Transverse colon (tissue), 4 donors: ENCODE measurements at regions of chr20 and their contacts with region 1.

Region 1: GRCh38 chr20:41347523-41348429 is 7.2 kb downstream of the LPIN3 start:
- DNase-seq: no peak
- H3K4me3 ChIP-seq: no peak overlapping the region
- H3K27ac ChIP-seq: no peak overlapping the region
- H3K4me1 ChIP-seq: peaks cover 3 to 4% (median 4%) of the 10 kb centered on the region in 4 donors
- H3K27me3 ChIP-seq: no peaks in the 10 kb centered on the region
- CTCF ChIP-seq: no peak
- EP300 ChIP-seq: no peak
- POLR2A ChIP-seq: no peak

Region 2: DNA sequence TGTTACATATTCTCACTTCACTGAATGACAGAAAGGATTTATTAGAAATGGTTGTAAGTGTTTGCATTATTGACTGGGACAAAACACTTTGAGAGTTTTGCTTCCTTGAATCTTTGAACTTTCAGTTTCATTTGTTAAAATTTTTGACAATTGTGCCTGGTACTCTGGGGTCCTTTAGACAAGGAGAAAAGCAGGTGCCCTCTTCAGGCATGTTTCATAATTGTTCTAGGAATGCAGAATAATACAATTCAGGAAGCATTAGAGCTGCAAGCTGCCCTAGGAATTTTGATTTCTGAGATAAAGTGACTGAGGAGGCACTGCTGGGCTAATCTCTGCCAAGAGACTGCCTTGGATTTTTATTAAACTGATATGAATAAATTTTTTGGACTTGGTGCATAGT is 269.4 kb before region 1 on chr20:
- in situ Hi-C with region 1: no loop called
- intact Hi-C with region 1: no loop called
- DNase-seq: no peak
- H3K4me3 ChIP-seq: no peak overlapping the region
- H3K27ac ChIP-seq: peak overlapping the region in 2 of 4 donors; percentile 2 to 8
- H3K4me1 ChIP-seq: peaks cover 9 to 56% (median 19%) of the 10 kb centered on the region in 4 donors
- H3K27me3 ChIP-seq: no peaks in the 10 kb centered on the region
- CTCF ChIP-seq: peak; percentile 29 to 45 (median 45)
- EP300 ChIP-seq: no peak
- POLR2A ChIP-seq: no peak

Region 3: GRCh38 chr20:41365777-41366598 is 18.2 kb after region 1 on chr20:
- in situ Hi-C with region 1: no loop called
- intact Hi-C with region 1: loop called (anchors 2 kb)
- DNase-seq: no peak
- H3K4me3 ChIP-seq: peak overlapping the region in 3 of 4 donors; percentile 23 to 48 (median 32)
- H3K27ac ChIP-seq: no peak overlapping the region
- H3K4me1 ChIP-seq: peaks cover 5 to 11% (median 9%) of the 10 kb centered on the region in 4 donors
- H3K27me3 ChIP-seq: peaks cover 54% of the 10 kb centered on the region
- CTCF ChIP-seq: no peak
- EP300 ChIP-seq: no peak
- POLR2A ChIP-seq: no peak

Region 4: GRCh38 chr20:41424546-41424945 is 76.8 kb after region 1 on chr20:
- in situ Hi-C with region 1: no loop called
- intact Hi-C with region 1: loop called (anchors 5 kb)
- DNase-seq: no peak
- H3K4me3 ChIP-seq: no peak overlapping the region
- H3K27ac ChIP-seq: no peak overlapping the region
- H3K4me1 ChIP-seq: peaks cover 0 to 9% (median 0%) of the 10 kb centered on the region in 4 donors
- H3K27me3 ChIP-seq: no peaks in the 10 kb centered on the region
- CTCF ChIP-seq: no peak
- EP300 ChIP-seq: no peak
- POLR2A ChIP-seq: no peak